ENCODE measurements at regions of chr20 and their contacts with region 1.

Region 1: DNA sequence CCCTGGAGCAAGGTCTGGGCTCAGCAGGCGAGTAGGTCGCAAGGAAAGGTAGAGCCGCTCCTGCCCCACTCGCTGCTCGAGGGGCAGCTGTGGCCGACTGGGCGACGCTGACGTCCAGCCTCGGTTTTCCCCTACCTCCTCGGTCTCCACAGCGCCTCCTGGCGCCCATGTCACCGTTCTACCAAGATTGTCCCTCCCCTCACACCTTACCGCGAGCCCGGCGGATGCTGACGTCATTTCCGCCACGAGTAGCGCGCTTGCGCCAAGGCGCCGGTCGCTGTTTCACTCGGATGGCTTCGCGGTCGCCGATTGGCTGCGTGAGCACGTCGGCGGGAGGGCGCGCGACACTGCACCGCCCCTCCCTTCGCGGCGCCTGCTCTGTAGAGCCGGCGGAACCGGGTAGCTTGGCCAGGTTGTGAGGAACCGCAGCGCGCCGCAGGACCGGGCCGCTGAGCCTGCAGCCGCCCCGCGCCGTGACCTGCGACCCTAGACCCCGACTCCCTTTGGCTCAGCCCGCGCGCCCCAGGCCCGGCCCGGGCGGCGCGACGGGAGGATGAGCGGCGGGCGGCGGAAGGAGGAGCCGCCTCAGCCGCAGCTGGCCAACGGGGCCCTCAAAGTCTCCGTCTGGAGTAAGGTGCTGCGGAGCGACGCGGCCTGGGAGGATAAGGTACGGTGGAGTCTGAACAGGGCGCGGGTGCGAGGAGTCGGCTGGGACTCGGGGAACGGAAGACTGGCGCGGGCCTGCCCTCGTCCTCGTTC is at the start of gene RAB5IF:
- DNase-seq: peak; percentile 100
- ATAC-seq: peak; percentile 91
- H3K4me3 Mint-ChIP-seq: peak within 1 kb of the TSS; percentile 100
- H3K27ac Mint-ChIP-seq: peak within 1 kb of the TSS; percentile 96
- H3K4me1 Mint-ChIP-seq: peaks cover 17% of the 10 kb centered on the region
- H3K27me3 Mint-ChIP-seq: no peaks in the 10 kb centered on the region
- total RNA-seq, gene RAB5IF: 71.7 to 90.2 TPM

Region 2: DNA sequence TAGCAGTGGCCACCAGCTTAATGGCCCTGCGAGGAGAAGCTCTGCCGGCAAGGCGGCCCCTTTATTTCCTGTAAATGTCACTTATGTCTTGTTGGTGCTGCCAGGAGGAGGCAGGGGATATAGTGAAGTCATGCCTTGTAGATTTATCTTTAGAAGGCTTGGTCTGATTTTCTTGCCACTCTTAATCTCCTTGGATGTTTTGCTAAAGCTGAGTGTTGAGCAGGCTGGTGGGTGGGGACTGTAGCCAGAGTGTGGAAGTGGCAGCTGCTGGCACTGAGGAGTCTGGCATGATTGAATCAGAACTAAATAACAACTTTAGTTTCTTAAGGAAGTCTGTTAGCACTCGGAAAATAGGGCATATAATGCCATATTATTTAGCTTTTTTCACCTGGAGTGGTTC is 755.9 kb before region 1 on chr20:
- CTCF ChIA-PET with region 1: no interaction called
- POLR2A ChIA-PET with region 1: no interaction called
- intact Hi-C with region 1: no loop called
- DNase-seq: no peak
- ATAC-seq: no peak
- H3K4me3 Mint-ChIP-seq: no peak overlapping the region
- H3K27ac Mint-ChIP-seq: no peak overlapping the region
- H3K4me1 Mint-ChIP-seq: peaks cover 9% of the 10 kb centered on the region
- H3K27me3 Mint-ChIP-seq: no peaks in the 10 kb centered on the region

Region 3: DNA sequence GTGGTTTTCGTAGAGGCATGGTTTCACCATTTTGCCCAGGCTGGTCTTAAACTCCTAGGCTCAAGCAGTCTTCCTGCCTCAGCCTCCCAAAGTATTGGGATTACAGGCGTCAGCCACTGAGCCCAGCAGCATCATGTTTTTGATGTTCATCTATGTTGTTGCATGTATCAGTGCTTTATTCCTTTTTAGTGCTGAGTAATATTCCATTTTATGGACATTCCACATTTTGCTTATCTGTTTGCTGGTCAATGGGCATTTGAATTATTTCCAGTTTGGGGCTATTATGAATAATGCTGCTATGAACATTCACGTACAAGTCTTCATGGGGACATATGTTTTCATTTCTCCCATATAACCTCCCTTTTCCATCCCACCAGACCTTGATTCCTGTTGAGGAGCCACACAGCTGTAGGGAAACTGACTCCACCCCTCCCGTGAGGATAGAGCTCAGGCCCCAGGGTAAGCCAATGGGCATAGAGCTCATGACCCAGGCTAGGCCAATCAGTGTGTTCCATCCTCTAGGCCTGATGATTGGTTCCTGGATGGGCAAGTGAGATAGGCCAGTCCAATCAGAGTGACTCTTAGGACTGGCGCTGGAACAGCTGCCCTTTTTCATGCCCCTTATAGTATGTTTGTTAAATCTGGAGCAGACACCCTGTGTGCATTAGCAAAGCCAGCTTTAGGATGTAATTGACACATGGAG is 250.0 kb before region 1 on chr20:
- CTCF ChIA-PET with region 1: no interaction called
- POLR2A ChIA-PET with region 1: no interaction called
- intact Hi-C with region 1: no loop called
- DNase-seq: no peak
- ATAC-seq: peak; percentile 61
- H3K4me3 Mint-ChIP-seq: no peak overlapping the region
- H3K27ac Mint-ChIP-seq: no peak overlapping the region
- H3K4me1 Mint-ChIP-seq: no peaks in the 10 kb centered on the region
- H3K27me3 Mint-ChIP-seq: peaks cover 3% of the 10 kb centered on the region

Region 4: DNA sequence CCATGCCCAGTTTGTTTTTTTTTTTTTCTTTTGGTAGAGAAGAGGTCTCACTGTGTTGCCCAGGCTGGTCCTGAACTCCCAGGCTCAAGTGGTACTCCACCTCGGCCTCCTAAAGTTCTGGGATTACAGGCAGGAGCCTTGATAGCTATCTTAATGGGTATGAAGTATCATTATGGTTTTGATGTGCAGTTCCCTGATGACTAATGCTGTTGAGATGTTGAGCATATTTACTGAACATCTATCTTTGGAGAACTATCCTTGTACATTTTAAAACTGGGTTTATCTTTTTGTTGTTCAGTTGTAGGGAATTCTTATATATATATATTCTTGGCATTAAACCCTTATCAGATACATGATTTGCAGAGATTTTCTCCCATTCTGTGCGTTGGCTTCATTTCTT is 85.6 kb before region 1 on chr20:
- CTCF ChIA-PET with region 1: no interaction called
- POLR2A ChIA-PET with region 1: no interaction called
- intact Hi-C with region 1: no loop called
- DNase-seq: no peak
- ATAC-seq: peak; percentile 55
- H3K4me3 Mint-ChIP-seq: no peak overlapping the region
- H3K27ac Mint-ChIP-seq: peak overlapping the region; percentile 76
- H3K4me1 Mint-ChIP-seq: peaks cover 14% of the 10 kb centered on the region
- H3K27me3 Mint-ChIP-seq: no peaks in the 10 kb centered on the region

Region 5: GRCh38 chr20:36562724-36563123 is 42.9 kb before region 1 on chr20:
- CTCF ChIA-PET with region 1: interaction called, 13 read pairs
- POLR2A ChIA-PET with region 1: no interaction called
- intact Hi-C with region 1: no loop called
- DNase-seq: no peak
- ATAC-seq: no peak
- H3K4me3 Mint-ChIP-seq: no peak overlapping the region
- H3K27ac Mint-ChIP-seq: no peak overlapping the region
- H3K4me1 Mint-ChIP-seq: no peaks in the 10 kb centered on the region
- H3K27me3 Mint-ChIP-seq: no peaks in the 10 kb centered on the region

Region 6: GRCh38 chr20:36591854-36592641 is 13.5 kb before region 1 on chr20:
- CTCF ChIA-PET with region 1: interaction called, 47 read pairs
- POLR2A ChIA-PET with region 1: interaction called, 13 read pairs
- intact Hi-C with region 1: loop called (anchors 1 kb)
- DNase-seq: peak; percentile 76
- ATAC-seq: peak; percentile 50
- H3K4me3 Mint-ChIP-seq: peak overlapping the region; percentile 4
- H3K27ac Mint-ChIP-seq: peak overlapping the region; percentile 69
- H3K4me1 Mint-ChIP-seq: peaks cover 57% of the 10 kb centered on the region
- H3K27me3 Mint-ChIP-seq: no peaks in the 10 kb centered on the region

Region 7: GRCh38 chr20:36745927-36746659 is 140.5 kb after region 1 on chr20 and contains the start of gene NDRG3:
- CTCF ChIA-PET with region 1: interaction called, 3 read pairs
- POLR2A ChIA-PET with region 1: no interaction called
- intact Hi-C with region 1: loop called in 1 of 2 experiments (anchors 1 kb)
- DNase-seq: peak; percentile 96
- ATAC-seq: peak; percentile 99
- H3K4me3 Mint-ChIP-seq: peak within 1 kb of the TSS; percentile 81
- H3K27ac Mint-ChIP-seq: peak within 1 kb of the TSS; percentile 87
- H3K4me1 Mint-ChIP-seq: peaks cover 20% of the 10 kb centered on the region
- H3K27me3 Mint-ChIP-seq: no peaks in the 10 kb centered on the region
- total RNA-seq, gene NDRG3: 24.8 to 27.5 TPM

Measured in activated CD4-positive, alpha-beta T cell treated with anti-CD3 and anti-CD28 coated beads for 36 hours (primary cell).